ENCODE measurements at regions of chr15 and their contacts with region 1.

Region 1: DNA sequence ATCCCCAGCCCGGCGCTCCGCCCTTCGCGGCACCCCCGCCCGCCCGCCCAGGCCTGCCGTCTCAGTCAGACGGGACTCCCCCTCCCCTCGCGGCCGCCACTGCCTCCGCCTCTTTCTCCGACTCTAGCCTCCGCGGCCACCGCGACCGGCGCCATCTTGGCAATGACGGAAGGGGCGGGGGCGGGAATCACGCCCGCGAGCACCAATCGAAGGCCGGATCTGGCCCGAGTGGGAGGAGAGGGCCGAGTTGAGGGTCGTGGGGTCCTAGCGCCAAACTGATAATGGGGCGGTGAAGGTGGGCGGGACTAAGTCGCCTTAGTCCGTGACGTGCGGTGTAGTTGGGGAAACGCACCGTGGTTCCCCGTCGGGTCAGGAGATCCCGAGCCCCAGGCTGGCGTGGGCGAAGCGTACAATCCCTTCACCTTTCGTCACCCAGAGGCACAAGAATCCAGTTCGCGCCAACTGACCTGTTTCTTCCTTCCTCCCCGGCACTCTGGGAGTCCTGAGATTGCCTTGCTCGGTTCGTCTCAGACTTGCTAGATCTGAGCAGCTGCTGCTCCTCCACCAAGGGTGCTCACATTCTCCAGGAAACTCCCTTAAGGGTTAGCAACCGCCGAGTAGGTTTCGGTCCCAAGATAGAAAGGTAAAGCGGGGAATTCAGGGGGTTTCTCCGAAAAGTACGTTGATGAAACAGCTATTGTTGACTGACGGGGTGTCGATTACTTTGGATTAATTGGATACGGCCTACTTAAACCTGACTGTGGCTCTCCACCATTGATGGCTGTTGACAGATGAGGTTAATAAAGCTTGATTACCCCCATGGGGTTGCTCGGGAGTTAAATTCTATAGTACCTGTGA is at the start of gene DENND4A:
- DNase-seq: peak; percentile 98
- H3K4me3 Mint-ChIP-seq: peak within 1 kb of the TSS; percentile 87
- H3K27ac Mint-ChIP-seq: peak within 1 kb of the TSS; percentile 99
- H3K4me1 Mint-ChIP-seq: peaks cover 59% of the 10 kb centered on the region
- H3K27me3 Mint-ChIP-seq: no peaks in the 10 kb centered on the region
- total RNA-seq, gene DENND4A: 62.3 and 65.8 TPM in 2 replicates

Region 2: DNA sequence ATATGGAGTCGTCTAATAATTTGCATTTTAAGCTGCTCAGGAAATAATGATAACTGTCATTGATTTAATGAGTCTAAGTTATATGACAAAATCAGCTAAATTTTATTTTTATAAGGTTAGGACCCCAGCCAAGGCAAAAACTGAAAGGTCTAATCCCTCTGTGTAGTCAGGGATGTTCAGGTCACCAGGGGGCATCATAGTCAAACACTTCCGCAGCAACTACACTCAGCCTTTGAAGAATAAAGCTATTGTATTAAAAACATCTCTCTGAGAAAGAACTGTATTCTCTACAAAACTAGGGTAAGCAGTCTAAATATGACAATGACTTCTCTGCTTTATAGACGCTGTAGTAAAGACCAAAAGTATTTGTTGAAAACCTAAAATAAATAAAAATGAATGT is 196.4 kb before region 1 on chr15:
- intact Hi-C with region 1: no loop called
- DNase-seq: no peak
- H3K4me3 Mint-ChIP-seq: no peak overlapping the region
- H3K27ac Mint-ChIP-seq: no peak overlapping the region
- H3K4me1 Mint-ChIP-seq: peaks cover 5% of the 10 kb centered on the region
- H3K27me3 Mint-ChIP-seq: no peaks in the 10 kb centered on the region

Region 3: GRCh38 chr15:65666257-65666656 is 126.1 kb before region 1 on chr15:
- intact Hi-C with region 1: no loop called
- DNase-seq: no peak
- H3K4me3 Mint-ChIP-seq: no peak overlapping the region
- H3K27ac Mint-ChIP-seq: peak overlapping the region; percentile 42
- H3K4me1 Mint-ChIP-seq: no peaks in the 10 kb centered on the region
- H3K27me3 Mint-ChIP-seq: no peaks in the 10 kb centered on the region

Region 4: DNA sequence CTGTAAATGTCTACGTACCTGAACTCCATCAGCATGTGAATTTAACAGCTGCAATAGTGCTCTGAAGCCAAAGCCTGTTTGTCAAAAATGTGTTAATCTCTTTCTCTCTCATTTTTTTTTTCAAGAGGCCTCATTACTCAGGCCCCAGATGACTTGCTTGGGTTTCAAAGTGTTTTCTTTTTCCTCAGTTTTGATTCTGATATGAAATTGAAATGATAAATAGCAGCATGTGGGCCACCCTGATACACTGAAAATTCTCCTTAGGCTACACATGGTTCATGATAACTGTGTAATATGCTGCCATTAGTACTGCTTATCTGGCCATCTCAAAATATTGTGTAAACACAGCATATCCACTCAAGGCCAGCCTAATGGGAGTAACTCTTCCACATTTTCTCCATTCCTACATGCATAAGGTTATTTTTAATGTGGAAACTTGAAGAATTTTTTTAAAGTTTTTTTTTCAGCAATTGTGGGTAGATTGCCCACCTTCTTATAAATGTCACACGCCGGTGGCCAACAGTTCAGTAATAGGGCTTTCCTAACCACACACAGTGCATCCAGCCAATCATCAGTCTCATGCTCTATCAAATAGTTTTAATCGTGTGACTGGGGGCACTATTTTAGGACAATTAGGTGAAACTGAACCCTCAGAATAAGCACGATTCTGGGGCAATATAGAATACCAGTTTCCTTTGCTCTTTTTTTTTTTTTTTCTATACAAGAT is 12.8 kb after region 1 on chr15:
- intact Hi-C with region 1: loop called (anchors 1 kb)
- DNase-seq: no peak
- H3K4me3 Mint-ChIP-seq: no peak overlapping the region
- H3K27ac Mint-ChIP-seq: peak overlapping the region; percentile 79
- H3K4me1 Mint-ChIP-seq: peaks cover 45% of the 10 kb centered on the region
- H3K27me3 Mint-ChIP-seq: no peaks in the 10 kb centered on the region

Region 5: DNA sequence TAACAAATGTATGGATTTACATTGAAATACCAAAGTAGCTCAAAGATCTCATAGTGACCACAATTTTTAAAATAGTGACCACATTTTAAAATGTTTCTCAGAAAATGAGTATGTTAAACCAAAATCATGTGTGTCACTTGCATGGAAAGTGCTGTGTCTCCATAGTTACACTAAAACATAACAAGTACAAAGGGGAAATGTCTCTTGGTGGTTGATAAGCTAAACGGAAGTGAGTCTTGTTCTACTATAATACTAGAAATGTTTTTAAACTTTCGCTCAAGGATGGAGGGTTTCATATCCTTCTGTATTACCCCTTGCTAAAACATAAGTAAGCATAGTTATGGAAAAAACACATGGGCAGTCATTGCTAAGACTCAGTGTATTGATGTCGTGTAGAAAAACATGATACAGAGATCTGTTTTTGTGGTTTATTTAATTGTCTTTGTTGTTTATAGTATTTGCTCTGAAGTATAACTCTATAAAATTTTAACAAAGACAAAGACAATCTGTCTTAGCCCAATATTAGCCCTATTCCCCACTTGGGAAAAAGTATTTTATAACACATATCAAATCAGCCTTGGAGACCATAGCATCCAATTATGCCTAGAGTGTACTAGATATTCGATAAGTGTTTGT is 26.7 kb after region 1 on chr15:
- intact Hi-C with region 1: loop called (anchors 1 kb)
- DNase-seq: no peak
- H3K4me3 Mint-ChIP-seq: peak overlapping the region; percentile 59
- H3K27ac Mint-ChIP-seq: peak overlapping the region; percentile 85
- H3K4me1 Mint-ChIP-seq: peaks cover 44% of the 10 kb centered on the region
- H3K27me3 Mint-ChIP-seq: no peaks in the 10 kb centered on the region

Region 6: GRCh38 chr15:65829130-65829770 is 36.9 kb after region 1 on chr15:
- intact Hi-C with region 1: loop called (anchors 2 kb)
- DNase-seq: no peak
- H3K4me3 Mint-ChIP-seq: no peak overlapping the region
- H3K27ac Mint-ChIP-seq: peak overlapping the region; percentile 73
- H3K4me1 Mint-ChIP-seq: peaks cover 54% of the 10 kb centered on the region
- H3K27me3 Mint-ChIP-seq: no peaks in the 10 kb centered on the region

Region 7: GRCh38 chr15:65887565-65887964 is 95.2 kb after region 1 on chr15:
- intact Hi-C with region 1: loop called (anchors 1 kb)
- DNase-seq: peak; percentile 46
- H3K4me3 Mint-ChIP-seq: no peak overlapping the region
- H3K27ac Mint-ChIP-seq: peak overlapping the region; percentile 68
- H3K4me1 Mint-ChIP-seq: peaks cover 71% of the 10 kb centered on the region
- H3K27me3 Mint-ChIP-seq: no peaks in the 10 kb centered on the region